ENCODE measurements at regions of chr9 and their contacts with region 1.

Region 1: DNA sequence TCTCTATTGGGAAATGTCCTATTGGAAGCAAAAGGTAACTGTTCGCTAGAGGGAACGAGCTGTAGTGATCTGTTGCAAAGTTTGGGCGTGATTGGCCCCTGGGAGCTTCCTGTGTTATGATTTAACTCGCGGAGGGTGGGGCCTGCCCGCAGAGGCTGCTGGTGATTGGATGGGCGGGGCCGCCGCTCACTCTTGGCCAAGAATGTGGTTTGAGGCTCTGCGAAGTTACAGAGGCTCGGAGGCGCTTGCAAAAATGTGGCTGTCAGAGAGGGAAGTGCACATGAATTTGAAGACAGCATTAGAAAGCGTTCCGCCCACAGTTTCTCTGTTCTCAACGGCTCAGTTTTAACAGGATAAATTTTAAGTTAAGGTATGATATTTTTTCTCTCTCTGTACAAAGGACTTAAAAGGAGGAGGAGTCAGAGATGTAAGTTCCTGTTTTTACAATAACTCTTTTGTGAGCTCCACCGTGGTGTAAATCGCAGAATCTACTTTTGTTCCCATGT is 46.9 kb downstream of the CNTRL start:
- DNase-seq: peak; percentile 98
- ATAC-seq: peak; percentile 99
- H3K4me3 Mint-ChIP-seq: peak overlapping the region; percentile 79
- H3K27ac Mint-ChIP-seq: peak overlapping the region; percentile 90
- H3K4me1 Mint-ChIP-seq: peaks cover 51% of the 10 kb centered on the region
- H3K27me3 Mint-ChIP-seq: no peaks in the 10 kb centered on the region

Region 2: DNA sequence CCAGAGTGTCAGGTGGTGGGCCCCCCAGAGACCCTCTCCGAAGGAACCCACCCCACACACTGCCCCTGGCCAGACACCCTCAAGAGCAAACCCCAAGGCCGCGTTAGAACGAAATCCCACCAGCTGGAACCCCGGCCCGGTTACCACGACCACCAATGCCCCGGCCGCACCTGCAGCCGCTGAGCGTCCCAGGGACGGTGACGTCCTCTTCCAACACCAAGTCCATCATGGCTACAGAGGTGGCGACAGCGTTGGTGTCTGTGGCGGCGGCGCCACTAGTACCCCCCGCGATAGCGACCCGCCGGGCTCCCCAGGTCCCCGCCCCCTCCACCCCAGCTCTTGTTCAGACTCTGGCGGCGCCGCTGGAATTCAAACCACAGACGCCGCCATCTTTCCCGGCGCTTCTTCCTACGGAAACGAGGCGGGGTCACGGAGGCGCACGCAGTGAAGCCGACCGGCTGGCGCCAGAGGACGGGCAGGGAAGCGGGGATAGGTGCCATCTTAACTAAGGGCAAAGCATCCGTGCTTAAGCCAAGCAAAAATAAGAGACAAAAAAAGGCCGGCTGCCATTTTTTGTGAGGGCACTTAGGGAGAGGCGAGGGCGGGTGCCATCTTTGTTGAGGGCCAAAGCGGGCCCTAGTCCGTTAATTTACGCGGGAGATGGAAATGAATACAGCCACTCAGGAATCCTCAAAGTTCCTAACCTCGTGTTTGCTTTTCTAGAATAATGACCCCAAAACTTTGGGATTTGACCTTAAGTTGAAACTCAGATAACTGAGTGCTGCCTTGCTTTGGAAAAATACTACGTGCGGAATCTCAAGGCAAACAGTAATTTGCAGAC is 541.7 kb before region 1 on chr9 and contains the start of gene CDK5RAP2:
- CTCF ChIA-PET with region 1: no interaction called
- POLR2A ChIA-PET with region 1: no interaction called
- intact Hi-C with region 1: loop called in 1 of 2 experiments (anchors 1 kb)
- DNase-seq: peak; percentile 96
- ATAC-seq: peak; percentile 99
- H3K4me3 Mint-ChIP-seq: peak within 1 kb of the TSS; percentile 99
- H3K27ac Mint-ChIP-seq: peak within 1 kb of the TSS; percentile 94
- H3K4me1 Mint-ChIP-seq: peaks cover 40% of the 10 kb centered on the region
- H3K27me3 Mint-ChIP-seq: no peaks in the 10 kb centered on the region
- total RNA-seq, gene CDK5RAP2: 68.8 to 85.8 TPM

Region 3: DNA sequence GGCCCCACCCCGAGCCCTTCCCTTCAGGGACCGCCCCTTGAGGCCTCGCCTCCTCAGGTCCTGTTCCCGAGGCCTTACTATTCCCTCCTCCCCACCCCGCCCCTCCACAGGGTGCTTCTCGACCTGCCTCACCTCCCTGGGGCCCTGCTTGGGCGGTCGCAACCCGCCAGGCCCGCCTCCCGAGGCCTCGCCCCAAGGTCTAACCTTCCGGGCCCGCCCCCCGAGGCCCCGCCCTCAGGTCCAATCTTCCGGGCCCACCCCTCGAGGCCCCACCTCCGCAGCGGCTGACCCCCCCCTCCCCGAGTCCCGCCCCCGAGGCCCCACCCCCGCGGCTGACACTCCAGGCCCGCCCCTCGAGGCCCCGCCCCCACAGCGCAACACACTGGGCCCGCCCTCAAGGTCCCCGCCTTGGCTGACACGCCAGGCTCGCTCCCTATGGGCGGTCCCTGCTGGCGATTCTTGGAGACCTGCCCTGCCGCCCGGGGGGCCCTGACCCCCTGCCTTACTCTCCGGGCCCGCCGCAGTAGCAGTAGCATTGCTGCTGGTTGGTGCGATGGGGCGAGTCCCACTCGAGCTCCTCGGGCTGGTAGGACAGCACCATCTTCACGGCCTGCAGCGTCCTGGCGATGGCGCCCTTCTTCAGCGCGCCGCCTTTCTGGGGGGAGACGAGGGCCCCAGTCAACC is 252.8 kb before region 1 on chr9:
- CTCF ChIA-PET with region 1: no interaction called
- POLR2A ChIA-PET with region 1: no interaction called
- intact Hi-C with region 1: loop called in 1 of 2 experiments (anchors 2 kb)
- DNase-seq: peak; percentile 99
- ATAC-seq: peak; percentile 94
- H3K4me3 Mint-ChIP-seq: peak overlapping the region; percentile 64
- H3K27ac Mint-ChIP-seq: peak overlapping the region; percentile 70
- H3K4me1 Mint-ChIP-seq: peaks cover 40% of the 10 kb centered on the region
- H3K27me3 Mint-ChIP-seq: no peaks in the 10 kb centered on the region

Region 4: GRCh38 chr9:121107041-121107440 is 14.6 kb before region 1 on chr9:
- CTCF ChIA-PET with region 1: interaction called, 10 read pairs
- POLR2A ChIA-PET with region 1: no interaction called
- intact Hi-C with region 1: no loop called
- DNase-seq: no peak
- ATAC-seq: peak; percentile 65
- H3K4me3 Mint-ChIP-seq: no peak overlapping the region
- H3K27ac Mint-ChIP-seq: no peak overlapping the region
- H3K4me1 Mint-ChIP-seq: peaks cover 9% of the 10 kb centered on the region
- H3K27me3 Mint-ChIP-seq: no peaks in the 10 kb centered on the region

Region 5: DNA sequence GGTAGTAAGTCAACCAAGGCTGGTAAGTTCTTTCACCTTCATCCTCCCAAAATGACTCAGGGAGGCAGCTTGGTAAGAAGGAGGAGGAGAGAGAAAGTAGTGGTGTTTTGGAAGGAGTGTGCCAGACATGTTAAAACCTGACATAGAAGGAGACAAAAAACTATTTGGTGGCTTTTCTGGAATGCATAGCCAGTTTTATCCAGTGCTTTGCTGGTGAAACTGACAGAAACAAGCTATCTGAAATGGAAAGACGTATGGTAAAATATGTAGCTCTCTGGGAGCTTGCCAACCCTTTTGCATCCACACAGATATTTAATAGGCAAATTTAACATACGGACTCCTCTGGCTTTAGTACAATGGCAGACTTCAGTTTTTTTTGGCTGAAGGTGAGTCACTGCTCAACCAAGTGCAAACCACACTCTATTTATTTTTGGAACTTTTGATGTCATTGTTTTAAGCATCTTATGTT is 34.7 kb after region 1 on chr9:
- CTCF ChIA-PET with region 1: interaction called, 5 read pairs
- POLR2A ChIA-PET with region 1: no interaction called
- intact Hi-C with region 1: loop called in 1 of 2 experiments (anchors 1 kb)
- DNase-seq: no peak
- ATAC-seq: peak; percentile 94
- H3K4me3 Mint-ChIP-seq: no peak overlapping the region
- H3K27ac Mint-ChIP-seq: peak overlapping the region; percentile 92
- H3K4me1 Mint-ChIP-seq: peaks cover 29% of the 10 kb centered on the region
- H3K27me3 Mint-ChIP-seq: no peaks in the 10 kb centered on the region